Vagina (tissue), 2 donors: ENCODE measurements at regions of chr1 and their contacts with region 1.

Region 1: DNA sequence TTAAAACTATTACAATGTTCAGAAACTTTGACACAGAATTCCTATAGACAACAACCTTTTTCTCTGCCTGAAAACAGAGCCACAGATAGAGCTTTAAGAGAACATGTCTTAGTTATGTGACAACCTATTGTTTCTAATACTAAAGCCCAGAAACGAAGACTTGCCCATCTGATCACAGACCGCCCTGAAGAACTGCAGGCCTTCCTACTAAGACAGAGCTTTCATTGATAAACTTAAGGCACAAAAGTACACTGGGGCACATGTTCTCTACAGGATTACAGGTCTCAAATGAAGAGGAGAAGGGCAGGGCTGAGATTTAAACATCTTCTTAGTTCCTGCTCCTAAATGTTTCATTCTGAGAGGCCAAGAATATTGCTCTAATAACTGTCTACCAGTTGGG is 452.7 kb downstream of the KCNT2 start:
- DNase-seq: no peak
- H3K4me3 ChIP-seq: no peak overlapping the region
- H3K27ac ChIP-seq: no peak overlapping the region
- H3K4me1 ChIP-seq: no peaks in the 10 kb centered on the region
- H3K27me3 ChIP-seq: no peaks in the 10 kb centered on the region
- CTCF ChIP-seq: no peak
- POLR2A ChIP-seq: no peak

Region 2: DNA sequence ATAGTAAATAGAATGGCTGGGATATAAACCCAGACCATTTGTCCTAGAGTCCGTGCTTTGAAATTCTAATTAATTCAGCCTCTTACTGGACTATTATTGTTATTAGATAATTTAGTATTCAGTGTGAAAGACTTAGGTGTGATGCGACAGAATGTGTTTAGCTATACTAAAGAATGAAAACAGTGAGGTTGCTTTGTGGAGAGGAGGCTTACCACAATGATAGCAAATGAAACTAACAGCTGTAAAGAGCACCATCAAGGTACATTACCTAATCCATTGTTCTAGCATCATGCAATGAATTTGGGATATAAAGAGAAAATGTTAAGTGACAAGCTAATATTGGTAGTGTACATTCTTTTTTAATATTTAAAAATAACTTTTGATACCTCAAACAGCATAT is 458.5 kb before region 1 on chr1:
- intact Hi-C with region 1: loop called (anchors 5 kb)
- DNase-seq: no peak
- H3K4me3 ChIP-seq: no peak overlapping the region
- H3K27ac ChIP-seq: no peak overlapping the region
- H3K4me1 ChIP-seq: no peaks in the 10 kb centered on the region
- H3K27me3 ChIP-seq: no peaks in the 10 kb centered on the region
- CTCF ChIP-seq: no peak
- POLR2A ChIP-seq: no peak

Region 3: GRCh38 chr1:196260267-196260666 is 104.7 kb after region 1 on chr1:
- intact Hi-C with region 1: no loop called
- DNase-seq: no peak
- H3K4me3 ChIP-seq: no peak overlapping the region
- H3K27ac ChIP-seq: no peak overlapping the region
- H3K4me1 ChIP-seq: no peaks in the 10 kb centered on the region
- H3K27me3 ChIP-seq: no peaks in the 10 kb centered on the region
- CTCF ChIP-seq: no peak
- POLR2A ChIP-seq: no peak

Region 4: DNA sequence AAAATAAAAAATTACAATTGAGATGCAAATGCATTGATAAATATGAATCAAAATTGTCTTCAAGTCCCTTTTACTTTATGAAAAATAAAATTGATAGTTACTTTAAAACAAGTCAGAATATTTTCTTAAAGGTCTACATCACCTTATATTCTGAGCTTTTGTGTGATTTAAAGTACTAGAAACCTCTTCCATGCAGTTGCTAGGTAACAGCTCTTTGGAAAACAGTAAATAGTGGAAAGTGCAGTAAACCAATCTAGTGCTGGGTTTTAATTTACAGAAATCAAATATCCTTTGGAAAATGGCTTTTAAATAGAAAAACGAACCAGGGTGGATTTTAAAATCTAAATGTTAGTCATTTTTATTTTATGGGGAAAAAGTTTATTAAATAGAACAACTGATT is 224.7 kb after region 1 on chr1:
- intact Hi-C with region 1: no loop called
- DNase-seq: no peak
- H3K4me3 ChIP-seq: no peak overlapping the region
- H3K27ac ChIP-seq: no peak overlapping the region
- H3K4me1 ChIP-seq: no peaks in the 10 kb centered on the region
- H3K27me3 ChIP-seq: no peaks in the 10 kb centered on the region
- CTCF ChIP-seq: no peak
- POLR2A ChIP-seq: no peak